Activated CD8-positive, alpha-beta T cell treated with anti-CD3 and anti-CD28 coated beads, Interleukin-2, amount 10 ng/mL, durations not matched to agents 7 days and 5 days (primary cell): ENCODE measurements at regions of chr14 and their contacts with region 1.

Region 1: GRCh38 chr14:68843471-68844209 is 50.8 kb upstream of the ZFP36L1 start:
- DNase-seq: peak; percentile 83
- ATAC-seq: peak; percentile 81
- H3K4me3 Mint-ChIP-seq: no peak overlapping the region
- H3K27ac Mint-ChIP-seq: no peak overlapping the region
- H3K4me1 Mint-ChIP-seq: peaks cover 19% of the 10 kb centered on the region
- H3K27me3 Mint-ChIP-seq: no peaks in the 10 kb centered on the region

Region 2: GRCh38 chr14:67934008-67934481 is 909.6 kb before region 1 on chr14:
- CTCF ChIA-PET with region 1: interaction called, 16 read pairs
- POLR2A ChIA-PET with region 1: no interaction called
- DNase-seq: no peak
- ATAC-seq: no peak
- H3K4me3 Mint-ChIP-seq: no peak overlapping the region
- H3K27ac Mint-ChIP-seq: no peak overlapping the region
- H3K4me1 Mint-ChIP-seq: peaks cover 3% of the 10 kb centered on the region
- H3K27me3 Mint-ChIP-seq: no peaks in the 10 kb centered on the region

Region 3: GRCh38 chr14:68248481-68249255 is 595.0 kb before region 1 on chr14:
- CTCF ChIA-PET with region 1: interaction called, 17 read pairs
- POLR2A ChIA-PET with region 1: no interaction called
- DNase-seq: no peak
- ATAC-seq: peak; percentile 53
- H3K4me3 Mint-ChIP-seq: no peak overlapping the region
- H3K27ac Mint-ChIP-seq: no peak overlapping the region
- H3K4me1 Mint-ChIP-seq: peaks cover 25% of the 10 kb centered on the region
- H3K27me3 Mint-ChIP-seq: no peaks in the 10 kb centered on the region

Region 4: GRCh38 chr14:68757618-68758081 is 86.0 kb before region 1 on chr14:
- CTCF ChIA-PET with region 1: no interaction called
- POLR2A ChIA-PET with region 1: no interaction called
- DNase-seq: no peak
- ATAC-seq: no peak
- H3K4me3 Mint-ChIP-seq: no peak overlapping the region
- H3K27ac Mint-ChIP-seq: no peak overlapping the region
- H3K4me1 Mint-ChIP-seq: peaks cover 23% of the 10 kb centered on the region
- H3K27me3 Mint-ChIP-seq: no peaks in the 10 kb centered on the region

Region 5: DNA sequence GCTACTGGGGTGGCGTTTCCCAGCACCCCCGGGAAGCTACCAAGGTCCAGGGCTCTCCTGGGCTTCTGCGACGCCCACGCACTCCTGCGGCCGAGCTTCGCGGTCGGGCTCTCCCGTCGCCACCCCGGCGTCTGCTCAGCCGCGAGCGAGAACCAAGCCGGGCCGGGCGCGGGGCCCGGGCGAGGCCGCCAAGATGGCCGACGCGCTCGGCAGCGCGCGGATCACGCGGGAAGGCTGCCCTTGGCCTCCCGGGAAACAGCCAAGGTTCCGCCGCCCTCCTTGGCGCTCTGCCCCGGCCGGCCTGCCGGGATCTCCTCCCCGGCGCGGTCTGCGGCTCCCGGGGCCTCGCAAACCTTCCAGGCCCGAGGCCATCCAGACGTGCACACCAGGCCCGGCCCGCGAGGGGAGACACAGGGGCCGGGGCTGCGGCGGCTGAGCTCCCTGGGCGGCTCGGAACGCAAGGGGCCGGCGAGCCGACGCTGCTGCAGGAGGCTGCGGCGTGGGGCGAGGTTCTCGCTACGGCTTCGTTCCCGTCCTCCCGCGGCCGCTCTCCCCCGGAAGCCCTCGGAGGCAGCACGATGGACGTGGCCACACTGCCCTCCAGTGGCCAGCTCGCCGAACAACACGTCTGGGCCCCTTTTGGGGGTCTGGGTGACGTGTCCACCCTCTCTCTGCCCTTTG is 27.2 kb before region 1 on chr14:
- CTCF ChIA-PET with region 1: interaction called, 107 read pairs
- POLR2A ChIA-PET with region 1: interaction called, 5 read pairs
- DNase-seq: peak; percentile 93
- ATAC-seq: peak; percentile 86
- H3K4me3 Mint-ChIP-seq: peak overlapping the region; percentile 66
- H3K27ac Mint-ChIP-seq: peak overlapping the region; percentile 90
- H3K4me1 Mint-ChIP-seq: peaks cover 69% of the 10 kb centered on the region
- H3K27me3 Mint-ChIP-seq: no peaks in the 10 kb centered on the region

Region 6: DNA sequence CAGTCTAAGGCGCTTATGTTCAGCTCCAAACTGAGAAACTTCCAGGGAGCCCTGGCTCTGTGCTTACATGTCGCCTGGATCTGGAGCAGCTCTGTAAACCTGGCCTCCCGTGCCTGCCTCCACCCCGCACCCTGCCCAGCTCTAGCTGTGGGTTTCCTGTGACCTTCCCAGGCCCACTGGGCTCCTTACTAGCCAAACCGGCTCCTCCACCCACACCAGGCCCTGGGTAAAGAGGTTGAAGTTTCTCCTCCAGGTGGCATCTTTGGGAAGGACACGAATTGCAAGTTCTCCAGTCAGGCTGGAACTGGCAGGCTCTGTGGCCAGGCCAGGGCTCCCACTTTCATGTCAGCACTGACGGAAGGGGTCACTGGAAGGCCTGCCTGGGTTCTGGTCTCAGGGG is 10.1 kb after region 1 on chr14:
- CTCF ChIA-PET with region 1: interaction called, 10 read pairs
- POLR2A ChIA-PET with region 1: no interaction called
- DNase-seq: no peak
- ATAC-seq: no peak
- H3K4me3 Mint-ChIP-seq: no peak overlapping the region
- H3K27ac Mint-ChIP-seq: no peak overlapping the region
- H3K4me1 Mint-ChIP-seq: peaks cover 9% of the 10 kb centered on the region
- H3K27me3 Mint-ChIP-seq: no peaks in the 10 kb centered on the region

Region 7: DNA sequence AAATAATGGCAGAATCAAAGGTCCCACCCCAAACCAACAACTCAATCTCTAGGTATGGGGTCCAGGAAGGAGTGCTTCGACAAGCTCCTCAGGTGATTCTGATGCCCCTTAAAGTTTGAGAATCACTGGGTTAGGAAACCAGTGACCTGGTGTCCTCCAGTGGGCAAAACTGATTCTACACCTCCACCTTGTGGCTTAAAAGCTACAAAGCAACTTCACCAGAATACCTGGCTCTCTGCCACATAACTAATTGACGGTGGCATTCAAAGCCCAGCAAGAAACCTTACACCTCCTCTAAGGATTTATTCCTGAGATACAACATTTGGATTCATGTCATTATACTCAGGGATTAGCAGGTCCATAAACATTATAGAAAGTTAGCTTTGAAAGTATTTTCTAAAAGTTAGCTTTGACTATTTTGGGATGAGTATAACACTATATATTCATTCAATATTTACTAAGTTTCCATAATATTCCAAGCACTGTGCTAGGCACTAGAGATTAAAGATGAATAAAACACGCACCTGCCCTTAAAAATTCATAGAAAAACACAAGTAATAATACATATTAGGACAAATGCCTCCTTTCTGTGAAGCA is 263.9 kb after region 1 on chr14:
- CTCF ChIA-PET with region 1: interaction called, 14 read pairs
- POLR2A ChIA-PET with region 1: no interaction called
- DNase-seq: peak; percentile 58
- ATAC-seq: peak; percentile 68
- H3K4me3 Mint-ChIP-seq: no peak overlapping the region
- H3K27ac Mint-ChIP-seq: no peak overlapping the region
- H3K4me1 Mint-ChIP-seq: peaks cover 4% of the 10 kb centered on the region
- H3K27me3 Mint-ChIP-seq: no peaks in the 10 kb centered on the region